Right ventricle myocardium inferior (tissue), 1 donor: ENCODE measurements at regions of chr16 and their contacts with region 1.

Region 1: GRCh38 chr16:11797166-11797956 is at the start of gene ZC3H7A:
- DNase-seq: peak; percentile 99
- ATAC-seq: peak; percentile 98
- total RNA-seq, gene ZC3H7A: 22.6 TPM

Region 2: GRCh38 chr16:10964039-10964890 is 833.1 kb before region 1 on chr16:
- intact Hi-C with region 1: loop called (anchors 10 kb)
- DNase-seq: peak; percentile 89
- ATAC-seq: peak; percentile 86

Region 3: DNA sequence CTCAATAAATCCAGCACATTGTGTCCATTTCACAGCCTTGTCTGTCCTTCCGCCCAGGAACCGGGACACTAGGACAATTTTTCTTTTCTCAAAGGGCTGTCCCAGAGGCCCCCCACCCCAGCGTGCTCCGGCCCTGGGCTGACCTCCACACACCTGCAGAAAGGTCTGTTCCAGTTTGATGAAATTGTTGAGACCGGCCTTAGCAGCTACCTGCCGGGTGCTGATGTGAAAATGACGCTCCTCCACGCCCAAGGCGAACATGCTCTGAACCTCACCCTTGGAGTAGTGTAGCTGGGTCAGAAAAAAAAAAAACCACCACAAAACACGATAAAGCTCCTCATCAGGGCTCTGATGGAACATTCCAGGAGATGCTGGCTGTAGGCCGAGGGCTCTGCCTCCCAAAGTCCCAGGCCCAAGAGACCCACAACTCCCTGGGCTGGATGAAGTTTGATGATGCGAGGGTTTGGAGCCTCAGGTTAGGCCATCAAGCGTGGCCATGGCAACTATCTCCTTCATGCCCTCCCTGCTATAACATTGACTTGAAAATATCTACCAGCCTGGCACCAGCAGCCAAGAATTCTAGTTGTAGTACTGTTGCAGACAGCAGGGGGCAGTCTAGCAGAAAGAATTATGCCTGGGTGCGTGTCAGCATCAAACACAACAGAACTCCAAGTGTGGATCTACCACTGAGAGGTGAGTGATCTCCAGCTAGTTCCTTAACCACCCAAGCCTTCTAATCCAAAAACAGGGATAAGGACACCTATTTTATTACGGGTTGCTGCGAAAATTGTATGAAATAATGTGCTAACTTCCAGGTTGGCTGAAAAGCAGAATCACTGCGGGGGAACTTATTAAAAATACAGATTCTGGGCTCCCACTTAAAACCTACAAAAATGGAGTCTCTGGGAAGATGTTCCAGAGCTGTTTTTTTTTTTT is 390.0 kb before region 1 on chr16:
- intact Hi-C with region 1: loop called (anchors 10 kb)
- DNase-seq: no peak
- ATAC-seq: peak; percentile 45

Region 4: GRCh38 chr16:11742539-11743307 is 54.6 kb before region 1 on chr16 and contains the start of gene TXNDC11:
- intact Hi-C with region 1: loop called (anchors 5 kb)
- DNase-seq: peak; percentile 100
- ATAC-seq: peak; percentile 99
- total RNA-seq, gene TXNDC11: 20.3 TPM

Region 5: GRCh38 chr16:11851294-11852091 is 54.1 kb after region 1 on chr16 and contains the start of gene RSL1D1:
- intact Hi-C with region 1: loop called (anchors 5 kb)
- DNase-seq: peak; percentile 92
- ATAC-seq: peak; percentile 98
- total RNA-seq, gene RSL1D1: 111 TPM

Region 6: GRCh38 chr16:12625068-12625467 is 827.7 kb after region 1 on chr16:
- intact Hi-C with region 1: no loop called
- DNase-seq: no peak
- ATAC-seq: no peak